Caco-2 (cell line): ENCODE measurements at regions of chr1 and their contacts with region 1.

Region 1: DNA sequence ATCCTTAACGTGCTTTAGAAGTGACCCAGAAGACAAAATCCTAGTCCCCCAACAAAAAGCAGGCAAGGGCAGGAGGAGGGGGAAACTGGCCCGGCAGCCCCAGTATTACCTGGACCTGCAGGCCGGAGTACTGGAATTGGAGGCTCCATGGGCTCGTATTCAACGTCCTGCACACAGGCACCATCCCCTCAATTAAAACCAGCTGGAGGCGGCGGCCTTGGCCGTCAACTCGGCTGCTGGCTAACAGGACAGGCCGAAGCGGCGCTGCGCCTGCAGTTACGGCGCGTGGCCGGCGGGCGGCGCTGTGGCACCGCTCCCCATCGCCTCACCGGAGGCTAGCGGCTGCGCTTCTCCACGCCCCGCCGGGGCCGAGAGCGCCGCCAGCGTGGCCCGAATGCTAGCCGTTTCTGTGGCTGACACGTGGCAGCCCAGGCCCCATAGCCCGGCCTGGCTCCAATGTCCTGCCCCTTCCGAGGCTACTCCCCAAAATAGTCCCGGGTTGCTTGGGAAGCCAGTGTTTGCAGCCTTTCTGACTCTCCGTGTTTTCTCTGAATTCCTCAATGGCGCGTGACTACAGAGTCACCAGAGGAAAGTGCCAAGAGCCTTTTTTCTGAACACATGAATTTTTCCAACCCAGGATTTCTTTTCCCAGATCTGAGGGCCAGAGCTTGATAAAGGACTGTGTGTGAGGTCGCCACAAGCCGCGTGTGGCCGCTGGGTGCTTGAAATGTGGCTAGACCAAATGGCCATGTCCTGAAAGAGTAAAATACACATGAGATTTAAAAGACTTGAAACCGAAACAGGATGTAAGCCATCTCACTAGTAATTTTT is 82.5 kb downstream of the HHIPL2 start:
- DNase-seq: peak; percentile 92 to 96
- H3K4me3 ChIP-seq: peak overlapping the region; percentile 36
- H3K4me3 Mint-ChIP-seq: peak overlapping the region; percentile 87
- H3K27ac Mint-ChIP-seq: peak overlapping the region; percentile 97
- H3K4me1 ChIP-seq: no peaks in the 10 kb centered on the region
- H3K4me1 Mint-ChIP-seq: peaks cover 11% of the 10 kb centered on the region
- H3K27me3 ChIP-seq: no peaks in the 10 kb centered on the region; the same call in 1 of the 2 replicates
- H3K27me3 Mint-ChIP-seq: peaks cover 4% of the 10 kb centered on the region
- CTCF ChIP-seq: peak; percentile 91 to 97

Region 2: GRCh38 chr1:222243902-222244301 is 221.5 kb before region 1 on chr1:
- CTCF ChIA-PET with region 1: no interaction called
- POLR2A ChIA-PET with region 1: no interaction called
- intact Hi-C with region 1: no loop called
- DNase-seq: no peak
- H3K4me3 ChIP-seq: no peak overlapping the region
- H3K4me3 Mint-ChIP-seq: no peak overlapping the region
- H3K27ac Mint-ChIP-seq: no peak overlapping the region
- H3K4me1 ChIP-seq: no peaks in the 10 kb centered on the region
- H3K4me1 Mint-ChIP-seq: no peaks in the 10 kb centered on the region
- H3K27me3 ChIP-seq: no peaks in the 10 kb centered on the region
- H3K27me3 Mint-ChIP-seq: peaks cover 2% of the 10 kb centered on the region
- CTCF ChIP-seq: no peak

Region 3: GRCh38 chr1:222347627-222348026 is 117.8 kb before region 1 on chr1:
- CTCF ChIA-PET with region 1: no interaction called
- POLR2A ChIA-PET with region 1: no interaction called
- intact Hi-C with region 1: no loop called
- DNase-seq: no peak
- H3K4me3 ChIP-seq: no peak overlapping the region
- H3K4me3 Mint-ChIP-seq: no peak overlapping the region
- H3K27ac Mint-ChIP-seq: no peak overlapping the region
- H3K4me1 ChIP-seq: no peaks in the 10 kb centered on the region
- H3K4me1 Mint-ChIP-seq: no peaks in the 10 kb centered on the region
- H3K27me3 ChIP-seq: no peaks in the 10 kb centered on the region
- H3K27me3 Mint-ChIP-seq: peaks cover 22% of the 10 kb centered on the region
- CTCF ChIP-seq: no peak

Region 4: GRCh38 chr1:222521299-222522104 is 56.1 kb after region 1 on chr1:
- CTCF ChIA-PET with region 1: no interaction called
- POLR2A ChIA-PET with region 1: no interaction called
- intact Hi-C with region 1: loop called (anchors 1 kb)
- DNase-seq: peak; percentile 62 to 68
- H3K4me3 ChIP-seq: no peak overlapping the region
- H3K4me3 Mint-ChIP-seq: no peak overlapping the region
- H3K27ac Mint-ChIP-seq: peak overlapping the region; percentile 67
- H3K4me1 ChIP-seq: peaks cover 17% of the 10 kb centered on the region
- H3K4me1 Mint-ChIP-seq: peaks cover 12% of the 10 kb centered on the region
- H3K27me3 ChIP-seq: no peaks in the 10 kb centered on the region
- H3K27me3 Mint-ChIP-seq: no peaks in the 10 kb centered on the region
- CTCF ChIP-seq: no peak

Region 5: DNA sequence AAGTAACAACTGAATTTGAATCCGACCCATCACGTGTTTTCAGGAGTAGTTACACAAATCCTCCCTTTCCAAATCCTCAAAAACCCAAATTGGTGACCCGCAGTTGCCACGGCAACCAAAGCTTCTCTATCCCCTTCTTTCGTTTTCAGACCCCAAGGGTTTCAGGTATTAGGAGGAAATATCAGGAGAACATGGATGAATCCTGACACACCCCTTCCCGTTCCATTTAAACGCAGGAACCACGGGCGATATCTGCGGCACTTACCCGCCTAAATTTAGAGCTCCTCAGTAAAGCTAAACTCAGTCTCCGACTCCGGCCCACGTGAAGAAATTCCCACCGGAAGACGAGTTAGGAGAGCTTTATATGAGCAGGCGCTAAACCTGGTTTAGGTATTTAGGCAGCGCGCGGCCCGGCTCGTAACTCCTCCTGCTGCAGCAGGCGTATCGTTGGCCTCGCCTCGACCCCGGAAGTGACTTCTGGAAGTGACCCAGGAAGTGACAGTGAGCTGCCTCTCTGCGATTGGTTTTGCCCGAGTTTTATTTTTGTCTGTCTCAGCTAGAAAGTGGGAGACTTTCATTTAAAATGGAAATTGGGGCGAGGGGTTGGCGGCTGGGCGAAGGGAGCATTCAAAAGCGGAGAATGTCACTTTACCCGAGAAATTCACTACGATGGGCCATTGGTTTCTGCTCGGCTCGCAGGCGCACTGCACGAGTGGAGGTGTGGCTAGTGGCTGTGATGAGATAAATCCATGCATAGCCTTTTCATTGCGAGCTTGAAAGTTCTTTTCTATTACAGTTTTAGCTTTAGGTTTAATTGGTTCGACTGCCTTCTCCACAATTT is 124.3 kb after region 1 on chr1 and contains the start of gene TAF1A:
- CTCF ChIA-PET with region 1: interaction called, 6 read pairs
- POLR2A ChIA-PET with region 1: no interaction called
- intact Hi-C with region 1: loop called (anchors 1 kb)
- DNase-seq: peak; percentile 85 to 89
- H3K4me3 ChIP-seq: peak within 1 kb of the TSS; percentile 66
- H3K4me3 Mint-ChIP-seq: peak within 1 kb of the TSS; percentile 92
- H3K27ac Mint-ChIP-seq: peak within 1 kb of the TSS; percentile 92
- H3K4me1 ChIP-seq: peaks cover 11% of the 10 kb centered on the region; the same call in 1 of the 2 replicates
- H3K4me1 Mint-ChIP-seq: peaks cover 20% of the 10 kb centered on the region
- H3K27me3 ChIP-seq: no peaks in the 10 kb centered on the region
- H3K27me3 Mint-ChIP-seq: no peaks in the 10 kb centered on the region
- CTCF ChIP-seq: no peak
- total RNA-seq, gene TAF1A: 14.8 and 15.9 TPM in 2 replicates

Region 6: GRCh38 chr1:222634180-222635013 is 169.0 kb after region 1 on chr1:
- CTCF ChIA-PET with region 1: interaction called, 29 read pairs
- POLR2A ChIA-PET with region 1: no interaction called
- intact Hi-C with region 1: loop called (anchors 1 kb)
- DNase-seq: peak; percentile 65 to 81
- H3K4me3 ChIP-seq: no peak overlapping the region
- H3K4me3 Mint-ChIP-seq: no peak overlapping the region
- H3K27ac Mint-ChIP-seq: no peak overlapping the region
- H3K4me1 ChIP-seq: no peaks in the 10 kb centered on the region
- H3K4me1 Mint-ChIP-seq: no peaks in the 10 kb centered on the region
- H3K27me3 ChIP-seq: no peaks in the 10 kb centered on the region
- H3K27me3 Mint-ChIP-seq: no peaks in the 10 kb centered on the region
- CTCF ChIP-seq: peak; percentile 75 to 84

Region 7: DNA sequence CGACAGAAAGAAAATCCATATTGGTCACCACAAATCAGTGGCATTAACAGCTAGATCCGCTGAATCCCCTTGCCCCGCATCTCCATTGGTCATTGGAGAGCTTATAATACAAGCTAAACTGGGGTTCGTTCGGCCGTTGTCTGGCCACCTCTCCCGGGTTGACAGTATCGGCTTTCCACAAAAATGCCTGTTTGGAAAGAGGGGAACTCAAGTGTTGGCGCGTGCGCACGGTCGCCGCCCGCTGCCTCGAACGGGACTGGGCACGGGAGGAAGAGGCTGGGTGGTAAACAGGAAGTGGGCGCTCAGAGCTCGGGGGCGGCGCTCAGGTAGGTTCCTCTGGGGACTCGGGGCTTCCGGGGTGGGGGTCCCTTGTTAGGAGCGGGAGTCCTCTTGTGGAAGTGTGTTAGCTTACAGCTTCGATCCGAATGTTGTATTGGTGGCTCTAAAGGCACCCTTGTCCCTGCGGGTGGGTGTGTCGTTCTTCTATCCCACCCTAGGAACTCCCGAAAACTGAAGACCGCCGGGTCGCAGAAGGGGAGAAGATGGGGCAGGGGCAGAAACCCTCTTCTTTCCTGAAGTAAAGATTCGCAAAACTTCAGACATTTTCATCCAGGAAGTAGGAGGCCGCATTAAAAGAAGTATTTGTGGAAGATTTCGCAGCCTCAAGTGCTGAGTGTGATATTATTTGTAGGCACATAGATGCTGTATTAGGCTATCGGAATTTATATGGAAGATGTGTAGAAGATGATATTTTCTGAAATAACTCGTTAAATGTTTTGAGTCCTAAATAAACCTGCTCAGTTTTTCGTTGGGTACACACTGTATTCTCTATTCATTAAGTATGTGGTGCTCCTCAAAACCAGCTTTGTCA is 247.9 kb after region 1 on chr1:
- CTCF ChIA-PET with region 1: no interaction called
- POLR2A ChIA-PET with region 1: no interaction called
- intact Hi-C with region 1: loop called (anchors 1 kb)
- DNase-seq: peak; percentile 93 to 95
- H3K4me3 ChIP-seq: peak overlapping the region; percentile 78
- H3K4me3 Mint-ChIP-seq: peak overlapping the region; percentile 99
- H3K27ac Mint-ChIP-seq: peak overlapping the region; percentile 97
- H3K4me1 ChIP-seq: peaks cover 3% of the 10 kb centered on the region; the same call in 1 of the 2 replicates
- H3K4me1 Mint-ChIP-seq: no peaks in the 10 kb centered on the region
- H3K27me3 ChIP-seq: no peaks in the 10 kb centered on the region
- H3K27me3 Mint-ChIP-seq: no peaks in the 10 kb centered on the region
- CTCF ChIP-seq: no peak